ENCODE measurements at regions of chr12 and their contacts with region 1.

Region 1: GRCh38 chr12:70576346-70577282 is 60.6 kb downstream of the PTPRB start:
- DNase-seq: peak in 4 of 14 experiments; percentile 2 to 64 (median 62)
- ATAC-seq: no peak
- H3K4me3 ChIP-seq: no peak overlapping the region
- H3K4me3 Mint-ChIP-seq: no peak overlapping the region
- H3K27ac ChIP-seq: no peak overlapping the region
- H3K27ac Mint-ChIP-seq: no peak overlapping the region
- H3K4me1 ChIP-seq: no peaks in the 10 kb centered on the region
- H3K4me1 Mint-ChIP-seq: no peaks in the 10 kb centered on the region
- H3K27me3 ChIP-seq: no peaks in the 10 kb centered on the region
- H3K27me3 Mint-ChIP-seq: peaks cover 5% of the 10 kb centered on the region
- CTCF ChIP-seq: peak; percentile 75

Region 2: DNA sequence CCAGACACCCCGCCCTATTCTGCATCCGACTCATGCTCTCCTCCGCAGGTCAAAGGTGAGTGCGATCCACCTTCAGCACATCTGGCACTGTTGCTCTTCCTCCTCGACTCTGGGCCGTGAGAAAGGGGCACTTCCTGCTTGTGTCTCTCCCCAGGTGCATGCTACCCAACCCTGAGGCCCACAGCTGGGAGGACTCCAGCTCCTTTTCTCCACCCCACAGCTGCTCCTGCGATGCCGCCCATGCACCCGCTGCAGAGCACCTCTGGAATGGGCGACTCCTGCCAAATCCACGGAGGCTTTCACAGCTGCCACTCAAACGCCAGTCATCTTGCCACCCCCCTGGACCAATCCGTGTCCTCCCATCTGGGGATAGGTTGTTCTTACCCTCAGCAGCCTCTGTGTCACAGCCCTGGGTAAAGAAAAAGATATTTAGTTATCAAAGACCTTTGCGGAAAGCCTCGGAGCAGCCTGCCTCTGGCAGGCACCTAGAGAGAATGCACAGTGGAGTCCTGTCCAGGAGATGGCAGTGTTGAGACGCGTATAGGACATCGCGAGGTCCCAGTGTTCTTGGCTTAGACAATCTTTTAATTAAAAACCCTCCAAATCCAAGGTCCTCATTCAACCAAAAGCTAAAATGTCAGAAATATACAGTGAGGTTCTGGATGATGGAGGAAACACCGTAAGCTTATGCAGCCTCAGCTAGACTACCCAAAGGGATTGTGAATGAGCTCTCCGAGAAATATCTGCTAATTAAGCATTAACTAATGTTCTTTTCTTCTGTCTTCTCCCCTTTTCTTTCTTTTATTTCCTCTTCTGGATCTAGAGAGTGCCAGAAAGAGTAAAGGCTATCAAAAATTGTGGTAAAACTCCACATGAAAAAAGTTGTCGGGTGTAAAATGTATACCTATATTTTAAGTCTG is 697.3 kb before region 1 on chr12:
- CTCF ChIA-PET with region 1: interaction called, 7 read pairs
- POLR2A ChIA-PET with region 1: no interaction called
- intact Hi-C with region 1: loop called (anchors 1 kb)
- DNase-seq: peak; percentile 36 to 78 (median 52)
- ATAC-seq: peak; percentile 92
- H3K4me3 ChIP-seq: no peak overlapping the region
- H3K4me3 Mint-ChIP-seq: no peak overlapping the region
- H3K27ac ChIP-seq: no peak overlapping the region
- H3K27ac Mint-ChIP-seq: no peak overlapping the region
- H3K4me1 ChIP-seq: no peaks in the 10 kb centered on the region
- H3K4me1 Mint-ChIP-seq: peaks cover 7% of the 10 kb centered on the region
- H3K27me3 ChIP-seq: peaks cover 0 to 2% of the 10 kb centered on the region in 2 experiments
- H3K27me3 Mint-ChIP-seq: peaks cover 45% of the 10 kb centered on the region
- CTCF ChIP-seq: peak; percentile 88

Region 3: DNA sequence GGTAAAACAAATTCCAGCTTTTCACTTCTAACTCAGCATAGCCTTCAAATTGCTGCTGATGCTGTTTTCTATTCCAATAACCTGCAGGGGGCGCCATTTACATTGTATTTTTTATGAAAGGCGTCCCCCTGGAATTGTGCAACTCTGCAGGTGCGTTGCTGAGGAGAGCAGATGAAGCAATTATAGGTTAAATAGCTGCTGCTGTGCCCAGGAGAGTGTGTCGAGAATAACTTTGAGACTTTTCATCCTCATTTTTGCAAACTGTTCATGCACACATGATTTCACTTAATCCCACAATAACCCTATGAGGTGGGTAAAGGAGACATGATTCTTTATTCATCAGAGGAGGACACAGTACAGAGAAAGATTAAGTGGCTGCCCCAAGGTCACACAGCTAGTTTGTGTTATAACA is 675.9 kb before region 1 on chr12:
- CTCF ChIA-PET with region 1: interaction called, 16 read pairs
- POLR2A ChIA-PET with region 1: no interaction called
- intact Hi-C with region 1: loop called (anchors 1 kb)
- DNase-seq: peak; percentile 26 to 71 (median 48)
- ATAC-seq: peak; percentile 29
- H3K4me3 ChIP-seq: no peak overlapping the region
- H3K4me3 Mint-ChIP-seq: no peak overlapping the region
- H3K27ac ChIP-seq: no peak overlapping the region
- H3K27ac Mint-ChIP-seq: no peak overlapping the region
- H3K4me1 ChIP-seq: no peaks in the 10 kb centered on the region
- H3K4me1 Mint-ChIP-seq: no peaks in the 10 kb centered on the region
- H3K27me3 ChIP-seq: no peaks in the 10 kb centered on the region
- H3K27me3 Mint-ChIP-seq: peaks cover 8% of the 10 kb centered on the region
- CTCF ChIP-seq: peak; percentile 87

Region 4: GRCh38 chr12:70214972-70215617 is 361.5 kb before region 1 on chr12:
- CTCF ChIA-PET with region 1: no interaction called
- POLR2A ChIA-PET with region 1: no interaction called
- intact Hi-C with region 1: loop called in 1 of 2 experiments (anchors 10 kb)
- DNase-seq: no peak
- ATAC-seq: no peak
- H3K4me3 ChIP-seq: no peak overlapping the region
- H3K4me3 Mint-ChIP-seq: no peak overlapping the region
- H3K27ac ChIP-seq: no peak overlapping the region
- H3K27ac Mint-ChIP-seq: no peak overlapping the region
- H3K4me1 ChIP-seq: no peaks in the 10 kb centered on the region
- H3K4me1 Mint-ChIP-seq: no peaks in the 10 kb centered on the region
- H3K27me3 ChIP-seq: no peaks in the 10 kb centered on the region
- H3K27me3 Mint-ChIP-seq: no peaks in the 10 kb centered on the region
- CTCF ChIP-seq: no peak

Measured in CD4-positive, alpha-beta T cell (primary cell).